ENCODE measurements at regions of chr17 and their contacts with region 1.

Region 1: DNA sequence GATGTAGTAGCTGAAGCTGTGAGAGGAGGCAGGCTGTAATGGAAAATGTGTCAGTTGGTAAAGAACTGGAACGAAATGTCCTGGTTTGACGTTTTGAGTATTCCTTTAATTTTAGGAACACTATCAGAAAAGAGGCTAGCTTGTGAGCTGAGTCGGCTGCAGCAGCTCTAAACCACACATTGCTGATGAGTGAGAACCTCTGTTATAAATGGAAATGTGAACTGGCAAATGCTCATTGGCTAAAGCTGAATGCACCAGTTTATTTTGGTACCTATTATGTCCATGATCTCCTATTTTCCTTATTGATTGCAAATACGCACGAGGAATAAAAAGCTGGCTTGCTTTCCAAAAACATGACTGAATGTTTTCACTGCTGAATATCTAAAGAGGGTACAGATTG is 11.0 kb upstream of the WIPI1 start:
- DNase-seq: no peak
- ATAC-seq: no peak
- H3K4me3 ChIP-seq: no peak overlapping the region
- H3K4me3 Mint-ChIP-seq: no peak overlapping the region
- H3K27ac ChIP-seq: no peak overlapping the region
- H3K27ac Mint-ChIP-seq: no peak overlapping the region
- H3K4me1 ChIP-seq: no peaks in the 10 kb centered on the region
- H3K4me1 Mint-ChIP-seq: no peaks in the 10 kb centered on the region
- H3K27me3 ChIP-seq: no peaks in the 10 kb centered on the region
- H3K27me3 Mint-ChIP-seq: no peaks in the 10 kb centered on the region
- CTCF ChIP-seq: no peak

Region 2: GRCh38 chr17:67959288-67959900 is 508.9 kb before region 1 on chr17:
- CTCF ChIA-PET with region 1: interaction called, 13 read pairs
- POLR2A ChIA-PET with region 1: no interaction called
- intact Hi-C with region 1: loop called (anchors 1 kb)
- DNase-seq: no peak
- ATAC-seq: no peak
- H3K4me3 ChIP-seq: no peak overlapping the region
- H3K4me3 Mint-ChIP-seq: no peak overlapping the region
- H3K27ac ChIP-seq: no peak overlapping the region
- H3K27ac Mint-ChIP-seq: peak overlapping the region; percentile 20
- H3K4me1 ChIP-seq: no peaks in the 10 kb centered on the region
- H3K4me1 Mint-ChIP-seq: peaks cover 3% of the 10 kb centered on the region
- H3K27me3 ChIP-seq: no peaks in the 10 kb centered on the region
- H3K27me3 Mint-ChIP-seq: no peaks in the 10 kb centered on the region
- CTCF ChIP-seq: no peak

Region 3: GRCh38 chr17:68057531-68057952 is 410.8 kb before region 1 on chr17:
- CTCF ChIA-PET with region 1: interaction called, 41 read pairs
- POLR2A ChIA-PET with region 1: no interaction called
- intact Hi-C with region 1: loop called (anchors 1 kb)
- DNase-seq: peak; percentile 19 to 67 (median 51)
- ATAC-seq: peak; percentile 86
- H3K4me3 ChIP-seq: no peak overlapping the region
- H3K4me3 Mint-ChIP-seq: no peak overlapping the region
- H3K27ac ChIP-seq: no peak overlapping the region
- H3K27ac Mint-ChIP-seq: no peak overlapping the region
- H3K4me1 ChIP-seq: no peaks in the 10 kb centered on the region
- H3K4me1 Mint-ChIP-seq: peaks cover 5% of the 10 kb centered on the region
- H3K27me3 ChIP-seq: no peaks in the 10 kb centered on the region
- H3K27me3 Mint-ChIP-seq: no peaks in the 10 kb centered on the region
- CTCF ChIP-seq: peak; percentile 67

Region 4: GRCh38 chr17:68172461-68172954 is 295.8 kb before region 1 on chr17:
- CTCF ChIA-PET with region 1: interaction called, 32 read pairs
- POLR2A ChIA-PET with region 1: no interaction called
- intact Hi-C with region 1: loop called (anchors 1 kb)
- DNase-seq: peak; percentile 54 to 85 (median 80)
- ATAC-seq: peak; percentile 81
- H3K4me3 ChIP-seq: no peak overlapping the region
- H3K4me3 Mint-ChIP-seq: no peak overlapping the region
- H3K27ac ChIP-seq: no peak overlapping the region
- H3K27ac Mint-ChIP-seq: no peak overlapping the region
- H3K4me1 ChIP-seq: peaks cover 19% of the 10 kb centered on the region
- H3K4me1 Mint-ChIP-seq: peaks cover 37% of the 10 kb centered on the region
- H3K27me3 ChIP-seq: no peaks in the 10 kb centered on the region
- H3K27me3 Mint-ChIP-seq: no peaks in the 10 kb centered on the region
- CTCF ChIP-seq: peak; percentile 99

Region 5: DNA sequence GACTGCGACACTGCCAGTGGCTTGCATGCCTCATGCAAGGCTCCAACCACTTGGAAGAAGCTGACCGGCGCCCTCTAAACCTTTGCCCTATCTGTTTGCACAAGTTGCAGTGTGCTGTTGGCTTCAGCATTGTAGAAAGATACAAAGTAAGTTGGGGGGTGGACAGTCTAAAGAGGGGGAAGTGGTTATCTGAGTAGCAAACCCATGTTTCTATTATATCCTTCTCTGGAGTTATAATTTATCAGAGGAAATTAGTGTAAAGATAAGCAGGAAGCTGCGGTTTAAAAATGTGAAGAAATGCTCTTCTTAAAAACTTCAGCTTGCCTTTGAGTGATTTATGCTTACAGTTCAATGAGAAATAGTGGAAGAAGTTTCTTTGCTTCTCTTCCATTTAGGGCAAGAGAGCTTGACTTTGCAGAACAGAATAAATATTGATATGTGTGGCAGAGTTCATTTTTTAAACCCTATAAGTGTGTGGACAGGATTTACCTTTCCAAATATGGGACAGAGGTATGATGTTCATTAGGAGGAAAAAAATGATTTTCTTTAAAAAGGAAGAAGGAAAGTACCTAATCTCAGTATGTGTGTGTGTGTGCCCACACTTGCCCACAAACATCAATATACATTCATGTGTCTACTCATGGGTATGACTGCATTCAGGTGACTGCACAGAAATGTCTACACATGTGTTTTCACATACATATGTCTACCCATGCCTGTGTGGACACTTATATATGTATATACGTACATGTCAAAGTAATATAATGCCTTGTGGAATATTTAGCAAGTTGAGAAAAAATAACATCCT is 212.4 kb before region 1 on chr17:
- CTCF ChIA-PET with region 1: interaction called, 66 read pairs
- POLR2A ChIA-PET with region 1: no interaction called
- intact Hi-C with region 1: no loop called
- DNase-seq: peak in 3 of 9 experiments; percentile 33 to 74 (median 58)
- ATAC-seq: peak; percentile 22
- H3K4me3 ChIP-seq: no peak overlapping the region
- H3K4me3 Mint-ChIP-seq: peak overlapping the region; percentile 24
- H3K27ac ChIP-seq: peak overlapping the region; percentile 34 to 97
- H3K27ac Mint-ChIP-seq: peak overlapping the region; percentile 97
- H3K4me1 ChIP-seq: peaks cover 76% of the 10 kb centered on the region
- H3K4me1 Mint-ChIP-seq: peaks cover 82% of the 10 kb centered on the region
- H3K27me3 ChIP-seq: no peaks in the 10 kb centered on the region
- H3K27me3 Mint-ChIP-seq: no peaks in the 10 kb centered on the region
- CTCF ChIP-seq: no peak

Measured in CD8-positive, alpha-beta T cell (primary cell).